ENCODE measurements at regions of chr4 and their contacts with region 1.

Region 1: DNA sequence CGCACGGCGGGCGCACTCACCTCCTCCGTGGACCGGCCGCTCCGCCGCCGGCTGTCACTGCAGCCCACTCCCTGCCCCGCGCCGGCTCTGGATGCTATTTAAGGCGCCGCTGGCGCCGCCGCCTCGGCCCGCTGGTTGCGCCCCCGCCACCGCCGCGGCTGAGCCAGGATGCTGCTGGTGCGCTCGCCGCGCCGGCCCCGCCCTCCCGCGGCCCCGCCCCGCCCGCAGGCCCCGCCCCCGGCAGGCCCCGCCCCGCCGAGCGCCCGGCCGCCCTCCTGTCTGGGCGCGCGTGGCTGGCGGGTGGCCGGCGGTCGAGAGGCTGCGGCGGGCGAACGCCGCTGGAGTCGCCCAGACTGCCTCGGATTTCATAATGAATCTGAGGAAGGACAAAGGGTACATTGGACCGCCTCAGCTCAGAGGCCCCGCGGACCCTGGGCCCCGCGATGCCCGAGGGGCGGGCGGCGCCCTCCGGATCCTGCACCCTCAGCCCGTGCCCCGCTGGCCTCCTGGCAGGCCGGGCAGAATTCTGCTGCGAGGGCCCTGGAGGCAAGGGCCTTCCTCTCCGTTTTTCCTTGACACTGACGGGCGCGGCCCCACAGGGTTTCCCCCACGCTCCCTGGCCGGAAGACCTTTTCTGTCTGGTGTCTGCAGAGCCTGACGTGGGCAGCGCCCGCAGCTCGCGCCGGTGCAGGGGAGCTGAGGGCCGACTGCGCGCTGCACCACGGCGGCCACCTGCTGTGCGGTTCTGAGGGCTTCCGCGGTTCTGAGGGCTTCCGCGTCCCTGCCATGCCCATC is at the start of gene ACSL1:
- DNase-seq: peak; percentile 72
- H3K4me3 Mint-ChIP-seq: peak within 1 kb of the TSS; percentile 94
- H3K27ac Mint-ChIP-seq: peak within 1 kb of the TSS; percentile 90
- H3K4me1 Mint-ChIP-seq: peaks cover 39% of the 10 kb centered on the region
- H3K27me3 Mint-ChIP-seq: peaks cover 19% of the 10 kb centered on the region
- total RNA-seq, gene ACSL1: 42.7 and 43.0 TPM in 2 replicates

Region 2: GRCh38 chr4:184474263-184475095 is 351.6 kb before region 1 on chr4 and contains the start of gene IRF2:
- intact Hi-C with region 1: loop called (anchors 1 kb)
- DNase-seq: peak; percentile 96
- H3K4me3 Mint-ChIP-seq: peak within 1 kb of the TSS; percentile 95
- H3K27ac Mint-ChIP-seq: peak within 1 kb of the TSS; percentile 96
- H3K4me1 Mint-ChIP-seq: peaks cover 46% of the 10 kb centered on the region
- H3K27me3 Mint-ChIP-seq: no peaks in the 10 kb centered on the region
- total RNA-seq, gene IRF2: 47.6 and 53.2 TPM in 2 replicates

Region 3: GRCh38 chr4:184733654-184734524 is 92.2 kb before region 1 on chr4 and contains the start of gene CENPU:
- intact Hi-C with region 1: loop called (anchors 2 kb)
- DNase-seq: peak; percentile 96
- H3K4me3 Mint-ChIP-seq: peak within 1 kb of the TSS; percentile 93
- H3K27ac Mint-ChIP-seq: peak within 1 kb of the TSS; percentile 87
- H3K4me1 Mint-ChIP-seq: peaks cover 37% of the 10 kb centered on the region
- H3K27me3 Mint-ChIP-seq: no peaks in the 10 kb centered on the region
- total RNA-seq, gene CENPU: 60.9 and 74.2 TPM in 2 replicates

Region 4: DNA sequence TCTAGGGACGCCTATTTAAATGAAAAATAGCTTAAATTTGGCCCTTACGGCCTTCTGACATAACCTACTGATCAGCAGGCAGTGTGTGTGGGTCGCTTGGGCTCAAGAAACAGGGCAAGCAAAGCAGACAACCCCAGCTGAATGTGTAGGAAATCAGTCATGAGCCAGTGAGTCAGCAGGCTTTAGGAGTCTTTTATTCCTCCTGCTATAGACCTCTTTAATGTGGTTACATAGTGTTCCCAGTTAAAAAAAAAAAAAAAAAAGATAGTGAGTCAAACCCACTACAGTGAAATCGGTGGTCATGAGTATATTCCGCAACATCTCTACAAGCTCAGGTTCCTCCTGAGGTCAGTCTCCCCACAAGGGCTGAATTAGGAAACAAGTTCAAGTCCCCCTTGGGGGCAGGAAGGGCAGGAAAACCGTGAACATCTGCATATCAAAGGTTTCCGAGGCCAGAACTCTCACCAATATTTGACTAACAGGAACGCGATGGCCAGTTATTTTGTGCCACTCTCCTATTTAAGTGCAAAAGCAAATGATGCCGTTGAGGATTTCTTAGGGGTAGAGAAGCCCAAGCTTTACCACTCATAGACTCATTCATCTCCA is 33.0 kb before region 1 on chr4:
- intact Hi-C with region 1: loop called (anchors 1 kb)
- DNase-seq: no peak
- H3K4me3 Mint-ChIP-seq: no peak overlapping the region
- H3K27ac Mint-ChIP-seq: peak overlapping the region; percentile 34
- H3K4me1 Mint-ChIP-seq: peaks cover 44% of the 10 kb centered on the region
- H3K27me3 Mint-ChIP-seq: no peaks in the 10 kb centered on the region

Region 5: DNA sequence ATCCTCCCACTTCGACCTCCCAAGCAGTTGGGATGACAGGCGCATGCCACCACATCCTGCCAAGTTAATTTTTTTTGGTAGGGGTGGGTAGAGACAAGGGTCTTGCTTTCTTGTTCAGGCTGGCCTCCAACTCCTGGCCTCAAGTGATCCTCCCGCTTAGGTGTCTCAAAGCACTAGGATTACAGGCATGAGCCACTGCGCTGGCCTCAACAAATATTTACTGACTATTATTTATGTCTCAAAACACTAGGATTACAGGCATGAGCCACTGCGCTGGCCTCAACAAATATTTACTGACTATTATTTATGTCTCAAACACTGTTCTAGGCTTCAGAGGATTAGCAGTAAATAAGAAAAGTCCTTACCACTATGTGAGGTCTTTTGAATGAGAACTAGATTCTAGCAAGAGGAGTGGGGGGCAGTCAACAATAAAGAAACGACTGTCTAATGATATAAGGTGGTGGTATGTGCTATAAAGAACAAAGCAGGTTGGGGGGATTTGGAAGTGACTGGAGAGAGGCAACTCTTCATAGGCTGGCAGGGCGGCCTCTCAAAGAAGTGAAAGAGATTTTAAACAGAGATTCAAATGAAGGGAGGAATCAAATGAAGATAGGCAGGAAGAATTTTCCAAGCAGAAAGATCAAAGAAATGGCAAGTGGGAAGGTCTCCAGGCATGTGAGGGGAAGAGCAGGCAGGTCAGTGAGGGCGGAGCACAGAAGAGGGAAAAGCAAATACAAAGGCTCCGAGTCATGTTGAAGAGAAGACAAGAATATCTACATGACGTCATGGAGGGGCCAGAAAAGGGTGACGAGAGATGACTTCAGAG is 12.4 kb after region 1 on chr4:
- intact Hi-C with region 1: no loop called
- DNase-seq: no peak
- H3K4me3 Mint-ChIP-seq: no peak overlapping the region
- H3K27ac Mint-ChIP-seq: no peak overlapping the region
- H3K4me1 Mint-ChIP-seq: peaks cover 8% of the 10 kb centered on the region
- H3K27me3 Mint-ChIP-seq: peaks cover 6% of the 10 kb centered on the region

Region 6: GRCh38 chr4:184860018-184860779 is 34.1 kb after region 1 on chr4:
- intact Hi-C with region 1: loop called (anchors 5 kb)
- DNase-seq: no peak
- H3K4me3 Mint-ChIP-seq: no peak overlapping the region
- H3K27ac Mint-ChIP-seq: no peak overlapping the region
- H3K4me1 Mint-ChIP-seq: peaks cover 24% of the 10 kb centered on the region
- H3K27me3 Mint-ChIP-seq: peaks cover 19% of the 10 kb centered on the region

Measured in activated T-helper 2 cell treated with anti-CD3 and anti-CD28 coated beads, Interferon-gamma antibody, Interleukin-2, Interleukin-4, amounts not matched to agents 10 μg/mL and 5 μg/mL and 100 μg/mL, durations not matched to agents 14 hours and 24 hours and 36 hours (primary cell).